ENCODE measurements at regions of chr6 and their contacts with region 1.

Region 1: GRCh38 chr6:33840048-33840926 is 36.5 kb upstream of the MLN start:
- DNase-seq: peak; percentile 99
- H3K4me3 Mint-ChIP-seq: peak overlapping the region; percentile 12
- H3K27ac Mint-ChIP-seq: peak overlapping the region; percentile 59
- H3K4me1 Mint-ChIP-seq: peaks cover 19% of the 10 kb centered on the region
- H3K27me3 Mint-ChIP-seq: no peaks in the 10 kb centered on the region
- CTCF ChIP-seq: no peak

Region 2: DNA sequence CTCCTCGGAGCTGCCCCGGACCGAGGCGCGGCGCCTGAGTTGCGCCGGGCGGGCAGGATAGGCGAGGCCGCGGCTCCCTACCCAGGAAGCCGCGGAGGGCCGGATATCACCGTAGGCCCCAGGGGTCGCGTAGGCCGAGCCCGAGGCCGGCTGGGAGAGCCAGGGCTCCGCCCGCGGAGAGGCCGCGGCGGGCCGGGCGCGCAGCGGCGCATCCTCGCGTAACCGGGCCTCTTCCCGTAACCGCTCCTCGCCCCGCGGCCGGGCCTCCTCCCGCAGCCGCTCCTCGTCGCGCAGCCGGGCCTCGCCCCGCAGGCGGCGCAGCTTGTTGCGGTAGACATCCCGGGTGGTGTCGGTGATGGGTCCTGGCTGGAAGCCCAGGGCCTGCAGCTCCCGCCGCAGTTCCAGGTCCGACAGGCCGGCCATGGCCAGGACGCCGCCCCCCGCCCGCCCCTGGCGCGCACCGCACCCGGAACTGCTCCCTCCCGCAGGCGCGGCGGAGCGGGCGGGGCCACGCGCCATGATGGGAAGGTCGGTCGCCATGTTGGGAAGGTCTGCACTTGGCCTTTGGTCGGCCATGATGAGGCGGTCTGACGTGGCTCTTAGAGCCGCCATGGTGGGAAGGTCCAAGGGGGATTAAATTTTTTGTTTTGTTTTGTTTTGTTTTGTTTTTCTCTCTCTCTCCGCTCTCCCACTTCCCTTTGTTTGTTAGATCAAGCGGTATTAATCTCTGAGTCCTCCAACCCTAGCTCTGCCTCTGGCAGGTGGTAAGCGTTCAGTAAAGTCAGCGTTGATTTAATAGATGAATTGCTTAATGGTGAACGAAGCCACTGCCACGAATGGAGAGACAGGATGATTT is 51.4 kb before region 1 on chr6 and contains the start of gene LEMD2:
- CTCF ChIA-PET with region 1: interaction called, 3 read pairs
- POLR2A ChIA-PET with region 1: interaction called, 28 read pairs
- intact Hi-C with region 1: loop called (anchors 10 kb)
- DNase-seq: peak; percentile 90
- H3K4me3 Mint-ChIP-seq: peak within 1 kb of the TSS; percentile 84
- H3K27ac Mint-ChIP-seq: peak within 1 kb of the TSS; percentile 92
- H3K4me1 Mint-ChIP-seq: peaks cover 21% of the 10 kb centered on the region
- H3K27me3 Mint-ChIP-seq: peaks cover 17% of the 10 kb centered on the region
- CTCF ChIP-seq: no peak
- total RNA-seq, gene LEMD2: 70.5 and 79.2 TPM in 2 replicates

Region 3: DNA sequence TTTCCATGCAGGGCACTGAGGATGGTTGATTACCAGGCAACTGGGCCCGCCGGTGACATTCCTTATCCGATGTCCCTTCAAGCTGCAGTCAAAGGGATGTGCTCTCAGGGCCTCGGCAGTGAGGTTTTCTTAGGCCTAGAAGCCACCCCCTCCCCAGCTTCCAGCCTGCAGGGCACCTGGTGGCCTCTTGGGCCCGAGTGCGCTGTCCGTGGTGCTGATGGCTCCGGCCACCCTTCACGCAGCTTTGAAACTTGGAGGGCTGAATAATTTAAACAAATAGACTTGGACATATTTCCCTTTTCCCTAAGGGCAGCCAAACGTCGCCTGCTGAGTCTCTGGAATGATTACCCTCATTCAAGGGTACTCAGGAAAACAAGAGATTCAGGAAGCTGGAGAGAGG is 27.6 kb before region 1 on chr6:
- CTCF ChIA-PET with region 1: no interaction called
- POLR2A ChIA-PET with region 1: no interaction called
- intact Hi-C with region 1: no loop called
- DNase-seq: peak; percentile 51
- H3K4me3 Mint-ChIP-seq: no peak overlapping the region
- H3K27ac Mint-ChIP-seq: no peak overlapping the region
- H3K4me1 Mint-ChIP-seq: no peaks in the 10 kb centered on the region
- H3K27me3 Mint-ChIP-seq: peaks cover 91% of the 10 kb centered on the region
- CTCF ChIP-seq: peak; percentile 9

Region 4: GRCh38 chr6:33967966-33968724 is 127.9 kb after region 1 on chr6:
- CTCF ChIA-PET with region 1: no interaction called
- POLR2A ChIA-PET with region 1: no interaction called
- intact Hi-C with region 1: no loop called
- DNase-seq: peak; percentile 24
- H3K4me3 Mint-ChIP-seq: no peak overlapping the region
- H3K27ac Mint-ChIP-seq: no peak overlapping the region
- H3K4me1 Mint-ChIP-seq: no peaks in the 10 kb centered on the region
- H3K27me3 Mint-ChIP-seq: peaks cover 51% of the 10 kb centered on the region
- CTCF ChIP-seq: no peak

Measured in MCF 10A (cell line).